ENCODE measurements at regions of chr1 and their contacts with region 1.

Region 1: DNA sequence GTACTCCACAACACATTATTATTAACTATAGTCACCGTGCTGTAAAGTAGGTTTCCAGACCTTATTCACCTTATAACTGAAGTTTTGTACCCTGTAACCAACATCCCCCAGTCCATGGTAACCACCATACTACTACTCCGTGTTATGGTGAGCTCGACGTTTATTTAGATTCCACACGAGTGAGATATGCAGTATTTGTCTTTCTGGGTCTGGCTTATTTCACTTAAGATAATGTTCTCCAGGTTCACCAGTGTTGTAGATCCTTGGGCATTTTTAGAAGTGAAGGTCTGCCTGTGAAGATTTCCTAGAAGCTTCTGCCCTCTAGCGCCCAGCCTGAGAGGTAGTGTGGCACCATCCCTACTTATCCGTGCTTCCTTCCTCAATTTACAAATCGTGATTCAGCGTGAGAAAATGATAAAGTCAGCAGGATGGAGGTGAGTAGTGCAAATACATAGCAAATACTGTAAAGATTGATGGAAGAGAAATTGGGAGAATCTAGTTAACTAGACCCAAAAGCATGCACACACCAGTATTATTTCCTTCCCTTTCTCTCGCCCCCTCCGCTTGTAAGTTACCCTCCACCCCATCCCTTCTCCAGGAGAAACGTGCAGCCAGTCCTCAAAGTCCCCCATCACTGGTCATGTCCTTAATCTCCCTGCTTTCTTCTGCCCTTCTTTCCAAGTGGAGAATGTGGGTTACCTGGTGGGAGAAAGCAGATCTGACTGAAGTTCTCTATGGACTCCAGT is 36.0 kb upstream of the DISC1 start:
- DNase-seq: no peak
- H3K4me3 ChIP-seq: no peak overlapping the region
- H3K27ac ChIP-seq: no peak overlapping the region
- H3K4me1 ChIP-seq: no peaks in the 10 kb centered on the region
- H3K27me3 ChIP-seq: no peaks in the 10 kb centered on the region
- CTCF ChIP-seq: peak in 2 of 3 donors; percentile 50 to 51
- POLR2A ChIP-seq: no peak

Region 2: GRCh38 chr1:231337472-231338269 is 253.0 kb before region 1 on chr1 and contains the start of gene EXOC8:
- intact Hi-C with region 1: no loop called
- DNase-seq: peak; percentile 93 to 96
- H3K4me3 ChIP-seq: peak within 1 kb of the TSS; percentile 72 to 88 (median 77)
- H3K27ac ChIP-seq: peak within 1 kb of the TSS; percentile 97 to 98
- H3K4me1 ChIP-seq: peaks cover 0 to 21% of the 10 kb centered on the region in 2 donors
- H3K27me3 ChIP-seq: no peaks in the 10 kb centered on the region
- CTCF ChIP-seq: peak in 1 of 3 donors; percentile 9
- POLR2A ChIP-seq: peak; percentile 55
- total RNA-seq, gene EXOC8: 13.1 to 17.7 (median 15.0) TPM

Region 3: GRCh38 chr1:231357831-231358354 is 232.7 kb before region 1 on chr1:
- intact Hi-C with region 1: loop called (anchors 10 kb)
- DNase-seq: no peak
- H3K4me3 ChIP-seq: no peak overlapping the region
- H3K27ac ChIP-seq: peak overlapping the region in 1 of 2 donors; percentile 56
- H3K4me1 ChIP-seq: no peaks in the 10 kb centered on the region
- H3K27me3 ChIP-seq: no peaks in the 10 kb centered on the region
- CTCF ChIP-seq: peak; percentile 53 to 85 (median 74)
- POLR2A ChIP-seq: no peak

Measured in breast epithelium (tissue), 4 donors.